ENCODE measurements at regions of chr4 and their contacts with region 1.

Region 1: DNA sequence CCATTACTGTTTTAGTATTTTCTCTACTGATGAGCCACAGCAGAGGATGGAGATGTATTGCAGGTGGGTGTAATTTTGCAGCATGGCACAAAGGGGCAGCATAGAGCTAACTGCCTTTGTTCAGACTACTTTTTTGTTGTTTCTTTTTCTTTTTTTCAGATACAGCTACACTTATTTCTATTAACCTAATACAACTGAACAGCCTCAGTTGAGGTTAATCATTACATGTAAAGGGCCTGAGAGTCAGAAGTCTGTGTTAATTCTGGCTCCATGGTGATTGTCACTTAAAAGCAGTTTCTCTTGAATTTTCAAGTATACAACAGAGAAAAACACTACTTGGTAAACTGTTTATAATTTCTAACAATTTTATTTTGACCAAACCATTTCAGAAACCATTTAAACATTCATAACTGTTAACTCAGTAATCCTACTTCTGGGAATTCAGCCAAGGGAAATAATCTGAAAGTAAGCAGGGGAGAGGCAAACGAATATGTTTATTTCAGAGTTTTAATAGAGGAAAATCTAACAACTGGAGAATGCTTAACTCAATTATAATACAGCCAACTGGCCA is 13.9 kb upstream of the PPEF2 start:
- DNase-seq: peak; percentile 43
- H3K4me3 Mint-ChIP-seq: no peak overlapping the region
- H3K27ac Mint-ChIP-seq: no peak overlapping the region
- H3K4me1 Mint-ChIP-seq: no peaks in the 10 kb centered on the region
- H3K27me3 Mint-ChIP-seq: no peaks in the 10 kb centered on the region

Region 2: DNA sequence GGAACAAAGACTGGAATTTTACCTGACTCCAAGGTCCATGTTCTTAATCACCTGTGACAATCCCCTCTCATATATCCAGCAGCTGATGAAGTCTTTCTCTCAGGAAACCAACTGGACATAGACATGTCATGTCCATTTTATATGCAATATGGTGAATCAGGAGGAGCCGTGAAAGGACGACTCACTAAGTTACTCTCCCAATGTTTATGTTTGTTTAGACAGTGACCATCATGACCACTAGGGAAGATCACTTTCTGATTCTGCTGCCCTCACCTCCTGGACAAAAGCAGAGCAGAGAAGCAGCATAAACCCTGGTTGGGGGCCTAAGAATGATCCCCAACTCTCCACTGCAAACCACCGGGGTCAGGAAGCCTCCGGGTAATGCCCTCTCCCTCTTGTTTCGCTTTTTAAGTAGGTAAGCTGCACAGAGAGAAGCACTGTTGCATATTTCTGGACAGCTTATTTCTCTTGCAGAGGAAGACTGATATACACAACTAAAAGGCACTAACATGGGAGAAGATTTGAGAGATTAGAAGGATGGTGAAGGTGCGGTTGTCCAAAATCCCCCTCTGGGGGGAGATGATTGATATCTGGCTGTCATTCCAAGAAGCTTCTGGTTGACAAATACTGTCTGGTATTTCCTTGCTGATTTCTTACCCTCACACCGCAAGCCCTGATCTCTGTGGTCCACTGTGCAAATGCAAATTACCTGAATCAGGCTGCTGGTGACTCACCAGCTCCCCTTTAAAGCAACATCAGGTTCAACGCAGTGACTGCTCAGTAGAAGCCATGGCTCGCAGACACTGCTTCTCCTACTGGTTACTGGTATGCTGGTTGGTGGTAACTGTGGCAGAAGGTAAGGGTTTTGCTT is 360.6 kb before region 1 on chr4 and contains the start of gene ODAPH:
- CTCF ChIA-PET with region 1: no interaction called
- intact Hi-C with region 1: no loop called
- DNase-seq: no peak
- H3K4me3 Mint-ChIP-seq: no peak within 1 kb of the TSS
- H3K27ac Mint-ChIP-seq: no peak within 1 kb of the TSS
- H3K4me1 Mint-ChIP-seq: no peaks in the 10 kb centered on the region
- H3K27me3 Mint-ChIP-seq: peaks cover 2% of the 10 kb centered on the region
- total RNA-seq, gene ODAPH: not detected

Region 3: GRCh38 chr4:75895744-75896314 is 20.3 kb before region 1 on chr4:
- CTCF ChIA-PET with region 1: interaction called, 33 read pairs
- intact Hi-C with region 1: no loop called
- DNase-seq: peak; percentile 18
- H3K4me3 Mint-ChIP-seq: no peak overlapping the region
- H3K27ac Mint-ChIP-seq: no peak overlapping the region
- H3K4me1 Mint-ChIP-seq: no peaks in the 10 kb centered on the region
- H3K27me3 Mint-ChIP-seq: no peaks in the 10 kb centered on the region

Region 4: DNA sequence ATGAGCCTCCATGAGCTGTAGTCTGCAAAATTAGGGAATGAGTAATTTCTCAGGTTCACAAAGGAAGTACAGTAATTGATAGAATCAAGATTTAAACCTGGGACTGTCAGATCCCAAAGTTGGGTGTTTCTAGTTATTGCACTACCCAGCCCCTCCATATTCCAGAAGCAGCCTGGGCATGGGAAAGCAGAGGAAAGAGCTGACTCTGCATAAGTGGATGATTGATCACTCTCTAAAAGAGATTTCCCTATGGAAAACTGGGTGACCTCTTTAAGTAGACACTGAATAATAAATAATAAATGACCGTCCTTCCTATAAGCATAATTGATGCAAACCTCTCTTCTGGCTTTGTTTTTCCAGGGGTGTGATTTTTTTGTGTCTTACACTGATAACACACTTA is 19.5 kb after region 1 on chr4:
- CTCF ChIA-PET with region 1: interaction called, 12 read pairs
- intact Hi-C with region 1: no loop called
- DNase-seq: no peak
- H3K4me3 Mint-ChIP-seq: no peak overlapping the region
- H3K27ac Mint-ChIP-seq: no peak overlapping the region
- H3K4me1 Mint-ChIP-seq: peaks cover 23% of the 10 kb centered on the region
- H3K27me3 Mint-ChIP-seq: no peaks in the 10 kb centered on the region

Region 5: GRCh38 chr4:75963558-75963957 is 47.4 kb after region 1 on chr4:
- CTCF ChIA-PET with region 1: no interaction called
- intact Hi-C with region 1: no loop called
- DNase-seq: no peak
- H3K4me3 Mint-ChIP-seq: no peak overlapping the region
- H3K27ac Mint-ChIP-seq: no peak overlapping the region
- H3K4me1 Mint-ChIP-seq: peaks cover 2% of the 10 kb centered on the region
- H3K27me3 Mint-ChIP-seq: no peaks in the 10 kb centered on the region

Region 6: DNA sequence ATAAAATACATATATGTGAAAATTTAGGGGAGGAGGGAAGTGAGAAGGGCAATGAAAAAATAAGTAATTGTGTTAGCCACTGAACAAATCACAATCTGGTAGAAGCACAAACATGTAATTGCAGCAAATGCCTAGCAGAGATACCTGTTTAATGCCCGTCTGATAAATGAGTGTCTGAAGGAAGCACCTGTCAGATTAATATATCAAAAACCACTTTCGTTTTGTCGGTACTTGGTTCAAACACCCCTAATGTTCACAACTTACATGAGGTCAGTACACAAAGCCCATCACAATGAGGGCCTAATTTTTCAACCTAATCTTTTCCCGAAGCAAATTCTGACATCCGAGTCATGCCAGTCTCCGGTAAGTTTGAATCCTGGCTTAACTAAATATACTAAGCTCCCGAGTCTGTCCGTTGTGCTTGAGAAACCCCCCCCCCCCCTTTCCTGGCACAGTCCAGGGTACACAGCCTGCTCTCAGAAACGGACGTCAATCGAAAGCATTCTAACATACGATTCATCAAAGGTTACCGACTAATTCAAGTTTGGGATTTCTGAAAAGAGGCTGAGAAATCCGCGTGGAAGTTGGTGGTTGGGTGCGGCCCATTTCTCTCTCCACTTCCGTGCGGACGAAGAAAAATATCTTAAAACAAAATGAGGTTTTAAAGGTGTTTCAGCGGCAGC is 73.8 kb after region 1 on chr4:
- CTCF ChIA-PET with region 1: no interaction called
- intact Hi-C with region 1: loop called (anchors 2 kb)
- DNase-seq: no peak
- H3K4me3 Mint-ChIP-seq: peak overlapping the region; percentile 85
- H3K27ac Mint-ChIP-seq: peak overlapping the region; percentile 72
- H3K4me1 Mint-ChIP-seq: peaks cover 27% of the 10 kb centered on the region
- H3K27me3 Mint-ChIP-seq: no peaks in the 10 kb centered on the region

Region 7: DNA sequence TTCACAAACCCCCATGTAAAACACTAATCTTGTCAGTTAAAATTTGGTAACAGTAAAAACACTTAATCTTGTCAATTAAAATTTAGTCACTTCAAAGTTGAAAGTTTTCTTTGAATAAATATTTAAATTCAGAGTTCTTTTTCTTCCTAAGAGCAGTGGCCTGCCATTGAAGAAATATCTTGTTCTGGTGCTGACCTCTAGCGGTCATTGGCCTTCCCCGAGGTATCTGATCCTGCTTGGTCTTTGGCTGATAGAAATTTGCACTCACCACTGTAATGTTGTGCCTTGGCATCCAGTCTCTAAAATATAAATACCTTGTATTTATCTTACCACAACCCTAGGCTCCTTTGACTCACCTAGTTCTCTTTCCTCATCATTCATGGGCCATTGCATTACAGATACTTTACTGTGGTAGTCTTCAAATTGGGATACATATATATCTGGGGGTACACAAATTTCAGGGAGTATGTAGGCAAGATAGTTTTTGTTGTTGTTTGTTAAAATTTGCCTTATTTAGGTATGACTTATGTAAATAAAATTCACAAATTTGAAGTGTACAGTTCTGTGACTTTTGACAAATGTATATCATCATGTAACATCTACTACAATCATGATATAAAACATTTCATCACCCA is 151.6 kb after region 1 on chr4:
- CTCF ChIA-PET with region 1: interaction called, 5 read pairs
- intact Hi-C with region 1: loop called (anchors 1 kb)
- DNase-seq: peak; percentile 90
- H3K4me3 Mint-ChIP-seq: no peak overlapping the region
- H3K27ac Mint-ChIP-seq: no peak overlapping the region
- H3K4me1 Mint-ChIP-seq: no peaks in the 10 kb centered on the region
- H3K27me3 Mint-ChIP-seq: peaks cover 4% of the 10 kb centered on the region

Region 8: GRCh38 chr4:76087007-76087769 is 171.0 kb after region 1 on chr4:
- CTCF ChIA-PET with region 1: interaction called, 3 read pairs
- intact Hi-C with region 1: loop called (anchors 1 kb)
- DNase-seq: peak; percentile 50
- H3K4me3 Mint-ChIP-seq: no peak overlapping the region
- H3K27ac Mint-ChIP-seq: no peak overlapping the region
- H3K4me1 Mint-ChIP-seq: peaks cover 4% of the 10 kb centered on the region
- H3K27me3 Mint-ChIP-seq: no peaks in the 10 kb centered on the region

Measured in activated naive CD4-positive, alpha-beta T cell treated with anti-CD3 and anti-CD28 coated beads for 36 hours (primary cell).